ENCODE measurements at regions of chr1 and their contacts with region 1.

Region 1: DNA sequence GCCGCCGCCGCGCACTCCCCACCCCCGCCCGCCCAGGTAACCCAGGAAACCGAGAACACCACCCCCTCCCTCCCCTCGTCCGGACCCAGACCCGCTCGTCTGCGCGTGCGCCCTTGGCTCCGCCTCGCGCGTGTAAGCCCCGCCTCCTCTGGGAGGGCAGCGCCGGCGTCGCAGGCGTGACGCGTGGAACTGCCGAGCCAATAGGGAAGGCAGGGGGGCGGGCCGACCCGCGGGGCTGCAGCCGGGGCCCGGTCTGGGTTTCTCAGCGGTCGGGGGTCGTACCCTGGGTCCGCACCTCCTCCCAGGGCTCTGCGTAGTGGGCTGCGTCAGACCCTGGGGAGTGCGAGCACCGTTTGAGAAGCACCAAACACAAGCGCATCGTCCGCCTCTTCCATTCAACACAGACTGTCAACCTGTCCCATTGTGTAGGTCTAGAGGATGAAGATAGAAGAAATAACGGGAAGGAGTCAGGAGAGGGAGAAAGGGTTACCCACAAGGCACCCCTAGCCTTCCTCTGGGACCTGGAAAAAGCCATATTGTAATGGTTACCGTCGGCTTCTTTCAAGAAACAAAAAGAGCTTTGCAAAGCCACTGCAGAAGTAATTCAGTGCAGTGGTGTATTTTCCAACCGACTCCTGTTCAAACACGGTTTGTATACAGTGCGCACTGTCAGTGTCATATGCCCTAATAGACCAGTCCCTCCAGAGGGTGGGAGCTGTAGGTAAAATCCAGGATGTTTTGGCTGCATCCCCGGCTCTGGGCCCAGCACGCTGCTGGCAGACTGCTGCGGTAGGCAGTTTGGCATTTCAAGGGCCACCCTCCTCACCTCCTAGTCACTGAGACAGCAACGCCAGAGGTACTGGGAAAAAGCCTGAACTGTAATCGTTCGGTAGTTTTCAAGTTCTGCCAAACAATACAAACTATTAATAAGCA is 473 bp upstream of the LYST start:
- DNase-seq: peak; percentile 95 to 99 (median 96)
- ATAC-seq: peak; percentile 94 to 99 (median 98)
- H3K4me3 ChIP-seq: peak overlapping the region; percentile 76 to 99 (median 93)
- H3K27ac ChIP-seq: peak overlapping the region; percentile 83 to 98 (median 94)
- H3K4me1 ChIP-seq: peaks cover 0 to 47% (median 22%) of the 10 kb centered on the region in 12 donors
- H3K27me3 ChIP-seq: no peaks in the 10 kb centered on the region
- CTCF ChIP-seq: no peak
- POLR2A ChIP-seq: peak; percentile 20 to 90

Region 2: DNA sequence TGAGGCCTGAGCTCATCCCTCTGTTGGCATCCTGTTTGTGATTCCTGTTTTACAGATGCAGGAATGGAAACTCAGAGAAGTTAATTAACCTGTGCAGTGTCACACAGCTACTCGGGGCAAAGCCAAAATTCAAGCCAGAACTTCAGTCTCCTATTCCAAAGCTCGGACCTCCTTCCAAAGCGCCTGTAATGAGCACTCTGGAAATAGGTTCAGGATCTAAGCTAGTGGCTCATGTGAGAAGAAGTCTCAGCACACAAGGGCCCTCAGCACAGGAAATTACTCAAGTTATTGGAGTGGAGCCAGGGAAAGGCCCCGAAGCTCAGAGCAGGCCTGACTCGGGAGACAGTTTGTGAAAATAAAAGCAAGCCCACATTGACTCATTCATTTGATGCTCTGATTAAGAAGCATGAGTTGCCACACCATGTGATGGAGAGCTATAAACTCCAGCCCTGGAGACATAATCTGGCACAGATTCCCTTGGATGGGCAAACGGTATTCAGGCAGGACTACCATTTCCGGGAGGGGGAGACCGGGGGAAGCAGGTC is 50.2 kb after region 1 on chr1:
- intact Hi-C with region 1: loop called in 1 of 10 experiments (anchors 5 kb)
- DNase-seq: peak in 4 of 5 donors; percentile 62 to 75 (median 74)
- ATAC-seq: peak; percentile 80 to 97 (median 96)
- H3K4me3 ChIP-seq: no peak overlapping the region
- H3K27ac ChIP-seq: peak overlapping the region; percentile 2 to 82 (median 50)
- H3K4me1 ChIP-seq: peaks cover 0 to 53% (median 10%) of the 10 kb centered on the region in 12 donors
- H3K27me3 ChIP-seq: no peaks in the 10 kb centered on the region
- CTCF ChIP-seq: no peak
- POLR2A ChIP-seq: no peak